GM12878 (cell line): ENCODE measurements at regions of chr7 and their contacts with region 1.

Region 1: GRCh38 chr7:24595671-24596418 is 22.6 kb downstream of the PALS2 start:
- DNase-seq: no peak
- ATAC-seq: peak; percentile 81
- H3K4me3 ChIP-seq: peak overlapping the region; percentile 43; the same call in 1 of the 2 replicates
- H3K27ac ChIP-seq: peak overlapping the region; percentile 92
- H3K4me1 ChIP-seq: peaks cover 19% of the 10 kb centered on the region
- H3K27me3 ChIP-seq: no peaks in the 10 kb centered on the region
- CTCF ChIP-seq: no peak
- EP300 ChIP-seq: no peak
- POLR2A ChIP-seq: no peak
- RAD21 ChIP-seq: no peak

Region 2: DNA sequence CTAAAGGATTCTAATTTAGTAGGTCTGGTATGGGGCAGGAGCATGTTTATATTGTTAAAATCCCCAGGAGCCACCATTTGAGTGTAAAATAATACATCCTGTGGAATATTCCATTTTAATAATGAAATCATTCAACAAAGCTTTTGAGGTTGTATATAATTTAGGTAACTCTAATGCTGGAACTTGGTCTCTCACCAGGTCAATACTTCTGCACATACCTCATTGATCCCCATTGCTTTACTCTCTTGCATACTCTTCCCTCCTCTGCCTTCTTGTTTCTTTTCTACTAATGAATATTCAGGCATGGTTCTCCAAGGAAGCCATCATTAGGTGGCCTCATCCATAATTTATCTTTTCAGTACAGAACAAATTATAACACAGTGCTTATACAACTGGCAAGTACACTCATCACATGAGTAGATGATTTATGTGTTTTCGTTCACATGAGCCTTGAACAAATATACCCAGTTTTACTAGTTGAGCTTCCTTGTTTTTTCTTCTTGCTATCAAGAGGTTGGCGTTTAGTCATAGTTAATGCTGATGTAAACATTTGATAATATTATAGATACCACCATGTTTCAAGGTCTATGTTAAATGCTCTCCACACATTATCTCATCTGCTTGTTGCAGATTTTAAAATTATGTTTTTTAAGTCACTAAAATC is 15.4 kb before region 1 on chr7:
- CTCF ChIA-PET with region 1: interaction called, 147 read pairs
- POLR2A ChIA-PET with region 1: interaction called, 5 read pairs
- RAD21 ChIA-PET with region 1: interaction called, 17 read pairs
- SMC1A ChIA-PET with region 1: interaction called, 67 read pairs
- in situ Hi-C with region 1: no loop called
- intact Hi-C with region 1: no loop called
- DNase-seq: no peak
- ATAC-seq: peak; percentile 5; the same call in 1 of the 3 replicates
- H3K4me3 ChIP-seq: no peak overlapping the region
- H3K27ac ChIP-seq: no peak overlapping the region
- H3K4me1 ChIP-seq: peaks cover 7% of the 10 kb centered on the region
- H3K27me3 ChIP-seq: no peaks in the 10 kb centered on the region
- CTCF ChIP-seq: no peak
- EP300 ChIP-seq: no peak
- POLR2A ChIP-seq: no peak
- RAD21 ChIP-seq: no peak

Region 3: GRCh38 chr7:24609059-24609458 is 13.2 kb after region 1 on chr7:
- CTCF ChIA-PET with region 1: interaction called, 4 read pairs
- POLR2A ChIA-PET with region 1: interaction called, 6 read pairs
- RAD21 ChIA-PET with region 1: interaction called, 3 read pairs
- SMC1A ChIA-PET with region 1: interaction called, 13 read pairs
- in situ Hi-C with region 1: no loop called
- intact Hi-C with region 1: no loop called
- DNase-seq: no peak
- ATAC-seq: no peak
- H3K4me3 ChIP-seq: no peak overlapping the region
- H3K27ac ChIP-seq: no peak overlapping the region
- H3K4me1 ChIP-seq: peaks cover 9% of the 10 kb centered on the region; the same call in 1 of the 2 replicates
- H3K27me3 ChIP-seq: no peaks in the 10 kb centered on the region
- CTCF ChIP-seq: no peak
- EP300 ChIP-seq: no peak
- POLR2A ChIP-seq: no peak
- RAD21 ChIP-seq: no peak